IMR-90 (cell line): ENCODE measurements at regions of chr16 and their contacts with region 1.

Region 1: DNA sequence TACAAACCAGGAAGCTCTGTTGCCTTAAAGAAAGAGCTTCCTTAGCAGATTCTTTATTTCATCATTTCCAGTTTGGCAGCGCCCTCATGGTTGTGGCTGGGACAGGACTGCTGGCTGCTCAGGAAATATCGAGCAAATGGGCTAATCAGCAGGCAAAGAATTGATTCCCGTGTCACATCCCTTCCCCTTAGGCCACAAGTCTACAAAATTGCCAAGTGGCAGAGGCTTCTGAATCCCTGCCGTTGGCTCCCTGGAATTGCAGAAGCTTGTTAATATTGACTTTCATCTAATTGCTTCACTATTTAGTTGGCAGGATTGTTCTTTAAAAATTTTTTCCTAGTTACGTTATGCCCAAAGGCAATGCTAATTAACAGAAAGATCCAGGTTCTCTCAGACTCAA is 456.3 kb upstream of the ERCC4 start:
- DNase-seq: no peak
- ATAC-seq: no peak
- H3K4me3 ChIP-seq: no peak overlapping the region
- H3K27ac ChIP-seq: no peak overlapping the region
- H3K4me1 ChIP-seq: no peaks in the 10 kb centered on the region
- H3K27me3 ChIP-seq: no peaks in the 10 kb centered on the region
- CTCF ChIP-seq: no peak
- POLR2A ChIP-seq: no peak
- RAD21 ChIP-seq: no peak

Region 2: DNA sequence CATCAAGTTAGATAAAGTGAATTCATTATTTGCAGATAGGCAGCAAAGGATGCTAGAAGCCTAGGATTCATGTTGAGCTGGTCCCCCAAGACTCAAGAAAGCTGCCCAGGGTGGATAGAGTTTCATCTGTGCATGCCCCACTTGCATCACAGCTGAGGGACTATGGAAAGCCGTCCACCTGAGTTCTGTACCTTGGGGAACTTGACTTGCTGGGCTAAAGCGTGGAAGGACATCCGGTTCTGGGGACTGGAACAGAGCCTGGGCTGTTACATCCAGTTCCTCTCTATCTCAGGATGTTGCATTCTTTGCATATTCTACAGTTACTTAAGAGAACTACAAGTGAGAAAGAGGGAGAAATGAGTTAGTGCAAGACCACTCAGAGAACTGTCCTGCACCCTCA is 103.8 kb before region 1 on chr16:
- CTCF ChIA-PET with region 1: no interaction called
- POLR2A ChIA-PET with region 1: no interaction called
- dilution Hi-C with region 1: no loop called
- in situ Hi-C with region 1: no loop called
- intact Hi-C with region 1: no loop called
- DNase-seq: no peak
- ATAC-seq: no peak
- H3K4me3 ChIP-seq: no peak overlapping the region
- H3K27ac ChIP-seq: no peak overlapping the region
- H3K4me1 ChIP-seq: no peaks in the 10 kb centered on the region
- H3K27me3 ChIP-seq: no peaks in the 10 kb centered on the region
- CTCF ChIP-seq: no peak
- POLR2A ChIP-seq: no peak
- RAD21 ChIP-seq: no peak

Region 3: GRCh38 chr16:13414154-13414553 is 49.5 kb before region 1 on chr16:
- CTCF ChIA-PET with region 1: no interaction called
- POLR2A ChIA-PET with region 1: no interaction called
- dilution Hi-C with region 1: no loop called
- in situ Hi-C with region 1: no loop called
- intact Hi-C with region 1: loop called (anchors 2 kb)
- DNase-seq: no peak
- ATAC-seq: no peak
- H3K4me3 ChIP-seq: no peak overlapping the region
- H3K27ac ChIP-seq: no peak overlapping the region
- H3K4me1 ChIP-seq: no peaks in the 10 kb centered on the region
- H3K27me3 ChIP-seq: no peaks in the 10 kb centered on the region
- CTCF ChIP-seq: no peak
- POLR2A ChIP-seq: no peak
- RAD21 ChIP-seq: no peak

Region 4: DNA sequence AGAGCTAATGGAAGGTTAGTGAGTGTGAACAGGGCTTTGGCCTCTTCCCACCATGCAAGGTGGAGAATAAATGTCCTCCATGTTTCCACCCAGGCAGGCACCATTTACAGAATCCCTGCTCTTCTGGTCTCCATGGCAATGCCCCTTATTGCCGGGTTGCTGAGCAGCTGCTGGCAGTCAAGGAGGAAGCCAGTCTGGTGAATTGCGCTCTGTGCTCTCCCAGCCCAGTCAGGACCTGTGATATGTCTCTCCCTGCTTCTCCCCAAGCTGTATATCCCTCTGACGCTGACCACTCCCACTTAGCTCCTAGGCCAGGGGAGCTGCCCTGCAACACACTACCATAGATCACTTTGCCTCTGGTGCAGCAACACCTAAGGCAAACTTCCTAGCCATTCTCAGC is 54.2 kb after region 1 on chr16:
- CTCF ChIA-PET with region 1: no interaction called
- POLR2A ChIA-PET with region 1: no interaction called
- dilution Hi-C with region 1: no loop called
- in situ Hi-C with region 1: no loop called
- intact Hi-C with region 1: no loop called
- DNase-seq: no peak
- ATAC-seq: no peak
- H3K4me3 ChIP-seq: no peak overlapping the region
- H3K27ac ChIP-seq: no peak overlapping the region
- H3K4me1 ChIP-seq: no peaks in the 10 kb centered on the region
- H3K27me3 ChIP-seq: no peaks in the 10 kb centered on the region
- CTCF ChIP-seq: no peak
- POLR2A ChIP-seq: no peak
- RAD21 ChIP-seq: no peak